B cell (primary cell): ENCODE measurements at regions of chrX and their contacts with region 1.

Region 1: DNA sequence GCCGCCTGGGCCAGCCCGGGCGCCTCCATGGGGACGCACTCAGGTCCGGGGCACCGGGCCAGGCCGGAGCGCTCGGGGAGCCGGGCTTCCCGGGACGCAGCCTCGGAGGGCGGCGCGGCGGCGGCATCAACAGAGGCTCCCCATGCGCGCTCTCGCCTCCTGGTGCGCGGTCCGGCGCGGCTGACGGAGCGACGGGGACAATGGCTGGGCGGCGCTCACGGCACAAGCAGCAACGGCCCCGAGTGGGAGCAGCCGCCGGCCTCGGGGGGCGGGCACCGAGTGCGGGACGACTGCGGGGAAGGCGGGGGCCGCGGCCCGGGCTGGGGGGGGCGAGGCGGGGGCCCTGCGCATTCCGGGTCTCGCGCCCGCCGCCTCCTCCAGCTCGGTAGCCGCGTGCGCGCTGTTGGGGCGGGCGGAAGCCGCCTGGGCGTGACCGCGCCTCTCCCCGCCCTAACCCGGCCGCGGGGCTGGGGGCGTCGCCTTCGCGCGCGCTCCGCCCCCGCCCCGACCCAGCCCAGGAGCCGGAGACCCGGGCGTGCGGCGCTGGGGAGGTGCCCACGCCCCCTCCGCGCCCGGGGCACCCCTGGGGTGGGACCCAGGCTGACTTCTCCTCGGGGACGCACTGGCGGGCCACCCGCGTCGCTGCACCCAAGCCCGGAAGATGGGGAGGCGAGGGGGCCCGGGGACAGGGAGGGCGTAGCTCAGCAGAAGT is at the start of gene PRKX:
- DNase-seq: peak; percentile 86
- ATAC-seq: peak; percentile 77
- H3K4me3 ChIP-seq: peak within 1 kb of the TSS; percentile 30 to 88 (median 77)
- H3K4me3 Mint-ChIP-seq: peak within 1 kb of the TSS; percentile 97
- H3K27ac ChIP-seq: peak within 1 kb of the TSS; percentile 68 to 83
- H3K27ac Mint-ChIP-seq: peak within 1 kb of the TSS; percentile 93
- H3K4me1 ChIP-seq: peaks cover 15 to 21% of the 10 kb centered on the region in 2 donors
- H3K4me1 Mint-ChIP-seq: peaks cover 8% of the 10 kb centered on the region
- H3K27me3 ChIP-seq: no peaks in the 10 kb centered on the region
- H3K27me3 Mint-ChIP-seq: no peaks in the 10 kb centered on the region
- CTCF ChIP-seq: no peak
- total RNA-seq, gene PRKX: 52.5 and 58.1 TPM in 2 replicates

Region 2: GRCh38 chrX:2928191-2928763 is 785.1 kb before region 1 on chrX:
- CTCF ChIA-PET with region 1: no interaction called
- POLR2A ChIA-PET with region 1: no interaction called
- intact Hi-C with region 1: loop called (anchors 5 kb)
- DNase-seq: peak; percentile 27
- ATAC-seq: peak; percentile 2
- H3K4me3 ChIP-seq: peak overlapping the region in 4 of 5 experiments; percentile 66 to 76 (median 71)
- H3K4me3 Mint-ChIP-seq: peak overlapping the region; percentile 91
- H3K27ac ChIP-seq: peak overlapping the region in 1 of 2 donors; percentile 31
- H3K27ac Mint-ChIP-seq: peak overlapping the region; percentile 80
- H3K4me1 ChIP-seq: no peaks in the 10 kb centered on the region
- H3K4me1 Mint-ChIP-seq: peaks cover 4% of the 10 kb centered on the region
- H3K27me3 ChIP-seq: no peaks in the 10 kb centered on the region
- H3K27me3 Mint-ChIP-seq: no peaks in the 10 kb centered on the region
- CTCF ChIP-seq: no peak

Region 3: GRCh38 chrX:3589474-3589873 is 123.9 kb before region 1 on chrX:
- CTCF ChIA-PET with region 1: no interaction called
- POLR2A ChIA-PET with region 1: no interaction called
- intact Hi-C with region 1: no loop called
- DNase-seq: no peak
- ATAC-seq: no peak
- H3K4me3 ChIP-seq: no peak overlapping the region
- H3K4me3 Mint-ChIP-seq: no peak overlapping the region
- H3K27ac ChIP-seq: no peak overlapping the region
- H3K27ac Mint-ChIP-seq: no peak overlapping the region
- H3K4me1 ChIP-seq: no peaks in the 10 kb centered on the region
- H3K4me1 Mint-ChIP-seq: peaks cover 3% of the 10 kb centered on the region
- H3K27me3 ChIP-seq: no peaks in the 10 kb centered on the region
- H3K27me3 Mint-ChIP-seq: no peaks in the 10 kb centered on the region
- CTCF ChIP-seq: no peak

Region 4: DNA sequence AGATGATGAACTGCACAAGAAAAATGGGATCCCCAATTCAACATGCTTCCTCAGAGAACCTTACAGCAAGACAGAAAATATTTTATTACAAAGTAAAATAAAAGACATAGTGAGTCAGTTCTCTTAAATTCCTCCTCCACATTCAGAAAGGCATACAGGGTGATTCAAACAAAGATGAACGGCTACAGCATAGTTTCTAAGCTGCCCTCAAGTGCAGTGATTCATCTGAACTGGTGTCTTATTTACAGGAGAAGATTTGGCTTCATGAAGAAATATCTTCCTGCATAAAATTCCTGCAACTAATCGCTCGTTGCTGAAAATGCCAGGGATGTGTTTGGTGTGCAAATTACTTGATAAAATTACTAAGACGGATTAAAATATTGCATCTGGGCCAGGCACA is 103.6 kb before region 1 on chrX:
- CTCF ChIA-PET with region 1: no interaction called
- POLR2A ChIA-PET with region 1: no interaction called
- intact Hi-C with region 1: no loop called
- DNase-seq: no peak
- ATAC-seq: no peak
- H3K4me3 ChIP-seq: no peak overlapping the region
- H3K4me3 Mint-ChIP-seq: no peak overlapping the region
- H3K27ac ChIP-seq: no peak overlapping the region
- H3K27ac Mint-ChIP-seq: no peak overlapping the region
- H3K4me1 ChIP-seq: no peaks in the 10 kb centered on the region
- H3K4me1 Mint-ChIP-seq: no peaks in the 10 kb centered on the region
- H3K27me3 ChIP-seq: no peaks in the 10 kb centered on the region
- H3K27me3 Mint-ChIP-seq: no peaks in the 10 kb centered on the region
- CTCF ChIP-seq: no peak

Region 5: DNA sequence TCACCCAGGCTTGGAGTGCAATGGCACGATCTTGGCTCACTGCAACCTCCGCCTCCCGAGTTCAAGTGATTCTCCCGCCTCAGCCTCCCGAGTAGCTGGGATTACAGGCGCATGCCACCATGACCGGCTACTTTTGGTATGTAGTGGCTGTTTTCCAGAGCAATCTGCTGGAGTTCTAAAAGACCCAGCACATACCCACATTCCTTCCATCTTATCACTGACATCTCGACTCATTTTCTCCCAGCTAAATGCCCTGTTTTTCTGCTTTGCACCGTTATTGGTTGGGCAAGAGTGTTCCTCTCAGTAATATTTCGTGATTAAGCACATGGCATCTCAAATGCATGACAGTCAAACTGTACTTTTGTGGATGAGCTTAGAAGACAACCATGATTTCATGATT is 53.6 kb before region 1 on chrX:
- CTCF ChIA-PET with region 1: no interaction called
- POLR2A ChIA-PET with region 1: interaction called, 4 read pairs
- intact Hi-C with region 1: loop called (anchors 5 kb)
- DNase-seq: no peak
- ATAC-seq: no peak
- H3K4me3 ChIP-seq: no peak overlapping the region
- H3K4me3 Mint-ChIP-seq: no peak overlapping the region
- H3K27ac ChIP-seq: no peak overlapping the region
- H3K27ac Mint-ChIP-seq: no peak overlapping the region
- H3K4me1 ChIP-seq: peaks cover 11 to 21% of the 10 kb centered on the region in 2 donors
- H3K4me1 Mint-ChIP-seq: peaks cover 21% of the 10 kb centered on the region
- H3K27me3 ChIP-seq: no peaks in the 10 kb centered on the region
- H3K27me3 Mint-ChIP-seq: no peaks in the 10 kb centered on the region
- CTCF ChIP-seq: no peak

Region 6: GRCh38 chrX:3728454-3728853 is 15.1 kb after region 1 on chrX:
- CTCF ChIA-PET with region 1: no interaction called
- POLR2A ChIA-PET with region 1: no interaction called
- intact Hi-C with region 1: no loop called
- DNase-seq: no peak
- ATAC-seq: no peak
- H3K4me3 ChIP-seq: no peak overlapping the region
- H3K4me3 Mint-ChIP-seq: no peak overlapping the region
- H3K27ac ChIP-seq: no peak overlapping the region
- H3K27ac Mint-ChIP-seq: no peak overlapping the region
- H3K4me1 ChIP-seq: no peaks in the 10 kb centered on the region
- H3K4me1 Mint-ChIP-seq: no peaks in the 10 kb centered on the region
- H3K27me3 ChIP-seq: no peaks in the 10 kb centered on the region
- H3K27me3 Mint-ChIP-seq: no peaks in the 10 kb centered on the region
- CTCF ChIP-seq: no peak

Region 7: DNA sequence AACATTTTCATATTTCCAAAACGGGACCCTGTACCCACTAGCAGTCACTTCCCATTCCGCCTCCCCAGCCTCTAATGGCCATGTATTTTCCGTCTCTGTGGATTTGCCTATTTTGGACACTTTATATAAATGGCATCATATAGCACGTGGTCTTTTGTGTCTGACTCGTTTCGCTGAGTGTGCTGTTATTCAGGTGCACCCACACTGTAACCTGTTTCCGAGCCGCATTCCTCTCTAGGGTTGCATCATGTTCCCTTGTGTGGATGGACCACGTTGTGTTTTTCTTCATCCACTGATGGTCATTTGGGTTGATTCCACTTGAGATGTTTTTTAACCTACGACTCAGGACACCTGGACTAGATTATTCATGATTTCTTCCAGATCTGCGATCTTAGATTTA is 85.2 kb after region 1 on chrX:
- CTCF ChIA-PET with region 1: no interaction called
- POLR2A ChIA-PET with region 1: no interaction called
- intact Hi-C with region 1: no loop called
- DNase-seq: no peak
- ATAC-seq: no peak
- H3K4me3 ChIP-seq: no peak overlapping the region
- H3K4me3 Mint-ChIP-seq: no peak overlapping the region
- H3K27ac ChIP-seq: no peak overlapping the region
- H3K27ac Mint-ChIP-seq: no peak overlapping the region
- H3K4me1 ChIP-seq: no peaks in the 10 kb centered on the region
- H3K4me1 Mint-ChIP-seq: no peaks in the 10 kb centered on the region
- H3K27me3 ChIP-seq: no peaks in the 10 kb centered on the region
- H3K27me3 Mint-ChIP-seq: peaks cover 9% of the 10 kb centered on the region
- CTCF ChIP-seq: no peak

Region 8: DNA sequence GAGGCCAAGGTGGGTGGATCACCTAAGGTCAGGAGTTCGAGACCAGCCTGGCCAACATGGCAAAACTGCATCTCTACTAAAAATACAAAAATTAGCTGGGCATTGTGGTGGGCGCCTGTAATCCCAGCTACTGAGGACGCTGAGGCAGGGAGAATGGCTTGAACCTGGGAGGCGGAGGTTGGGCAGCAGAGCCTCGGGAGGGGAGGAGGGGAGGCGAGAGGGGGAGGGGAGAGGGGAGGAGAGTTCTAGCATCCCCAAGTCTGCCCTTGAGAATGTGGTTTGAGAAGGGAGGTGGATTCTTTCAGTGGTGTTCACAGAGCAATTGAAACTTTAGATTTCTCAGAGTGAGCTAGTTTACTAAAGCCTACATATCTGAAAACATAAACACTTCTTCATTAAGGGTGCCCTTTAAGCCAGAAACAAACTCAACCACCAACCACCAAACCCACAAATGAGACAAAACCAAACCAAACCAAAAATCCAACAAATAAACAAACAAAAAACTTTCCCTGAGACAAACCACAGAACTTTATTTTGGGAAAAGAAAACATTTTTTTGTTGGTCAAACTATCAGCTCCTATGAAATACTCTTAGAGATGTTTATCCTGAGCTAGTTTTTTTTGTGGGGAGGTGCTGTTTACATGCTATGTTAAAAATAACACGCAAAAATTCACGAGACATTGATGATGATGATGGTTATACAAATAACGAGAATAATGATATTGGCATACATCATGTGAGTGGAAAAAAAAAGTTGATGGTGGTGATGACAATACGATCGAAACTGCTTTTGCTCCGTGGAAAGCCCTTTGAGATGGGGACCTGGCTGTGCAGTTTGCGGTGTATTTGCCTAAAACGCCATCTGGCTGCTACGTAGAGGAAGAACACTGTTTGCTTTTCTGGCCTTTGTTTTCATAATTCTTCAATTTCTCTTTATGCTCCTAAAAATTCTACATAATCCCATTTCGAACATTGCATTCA is 98.2 kb after region 1 on chrX:
- CTCF ChIA-PET with region 1: interaction called, 3 read pairs
- POLR2A ChIA-PET with region 1: no interaction called
- intact Hi-C with region 1: loop called (anchors 1 kb)
- DNase-seq: peak; percentile 73
- ATAC-seq: no peak
- H3K4me3 ChIP-seq: no peak overlapping the region
- H3K4me3 Mint-ChIP-seq: peak overlapping the region; percentile 41
- H3K27ac ChIP-seq: peak overlapping the region in 1 of 2 donors; percentile 28
- H3K27ac Mint-ChIP-seq: peak overlapping the region; percentile 63
- H3K4me1 ChIP-seq: peaks cover 9 to 12% of the 10 kb centered on the region in 2 donors
- H3K4me1 Mint-ChIP-seq: peaks cover 13% of the 10 kb centered on the region
- H3K27me3 ChIP-seq: peaks cover 0 to 5% (median 2%) of the 10 kb centered on the region in 4 experiments
- H3K27me3 Mint-ChIP-seq: peaks cover 17% of the 10 kb centered on the region
- CTCF ChIP-seq: peak; percentile 60